ENCODE measurements at regions of chr12 and their contacts with region 1.

Region 1: DNA sequence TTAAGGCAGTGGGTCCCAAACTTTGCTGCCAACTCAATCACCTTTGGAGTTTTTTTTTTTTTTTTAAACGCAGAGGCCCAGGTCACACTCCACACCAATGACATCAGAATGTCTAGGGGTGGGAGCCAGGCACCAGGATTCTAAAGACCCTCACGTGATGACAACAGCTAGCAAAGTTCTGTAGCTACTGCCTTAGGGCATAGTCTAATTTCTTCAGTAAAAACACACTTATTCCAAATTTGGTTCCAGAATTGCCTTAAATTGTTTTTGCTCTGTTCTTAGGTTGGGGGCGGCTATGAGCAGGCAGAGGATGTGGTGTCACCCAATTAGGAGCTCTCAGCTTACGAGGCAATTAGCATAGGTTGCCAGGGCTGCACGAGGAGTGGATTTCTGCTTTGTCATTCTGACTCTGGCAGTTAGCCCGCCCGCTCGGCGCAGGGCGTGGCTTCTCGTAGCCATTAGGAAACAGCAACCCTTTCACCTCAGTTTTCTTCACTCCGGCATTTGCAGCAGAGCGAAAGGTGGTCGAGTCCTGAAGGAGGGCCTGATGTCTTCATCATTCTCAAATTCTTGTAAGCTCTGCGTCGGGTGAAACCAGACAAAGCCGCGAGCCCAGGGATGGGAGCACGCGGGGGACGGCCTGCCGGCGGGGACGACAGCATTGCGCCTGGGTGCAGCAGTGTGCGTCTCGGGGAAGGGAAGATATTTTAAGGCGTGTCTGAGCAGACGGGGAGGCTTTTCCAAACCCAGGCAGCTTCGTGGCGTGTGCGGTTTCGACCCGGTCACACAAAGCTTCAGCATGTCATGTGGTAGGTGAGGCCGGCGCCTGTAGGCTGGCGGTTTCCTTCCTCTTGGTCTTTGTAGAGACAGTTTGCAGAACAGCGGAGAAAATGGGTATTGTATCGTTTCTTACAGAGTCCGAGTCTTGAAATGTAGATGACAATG is 16.7 kb upstream of the EID3 start:
- DNase-seq: peak; percentile 96

Region 2: DNA sequence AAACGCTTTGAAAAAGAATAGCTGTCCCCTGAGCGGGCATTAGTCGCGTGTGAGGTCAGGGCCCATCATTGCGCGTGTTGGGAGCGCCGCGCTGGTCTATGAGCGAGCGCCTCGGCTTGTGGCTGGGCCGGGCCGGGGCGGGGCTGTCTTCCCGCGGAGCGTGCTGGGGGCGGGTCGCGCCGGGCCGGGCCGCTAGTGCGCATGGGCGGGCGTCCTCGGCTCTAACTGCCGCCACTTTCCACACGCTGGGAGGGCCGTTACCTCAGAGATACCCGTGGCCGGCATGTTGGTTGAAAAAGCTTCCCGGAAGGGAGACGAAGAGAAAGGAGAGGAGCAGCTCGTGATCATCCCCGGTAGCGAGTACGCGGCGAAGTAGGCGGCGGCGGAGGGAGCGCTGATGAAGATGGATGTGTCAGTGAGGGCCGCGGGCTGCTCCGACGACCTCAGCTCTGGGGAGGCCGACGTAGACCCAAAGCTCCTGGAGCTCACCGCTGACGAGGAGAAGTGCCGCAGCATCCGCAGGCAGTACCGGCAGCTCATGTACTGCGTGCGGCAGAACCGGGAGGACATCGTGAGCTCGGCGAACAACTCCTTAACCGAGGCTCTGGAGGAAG is 16.8 kb after region 1 on chr12 and contains the start of gene EID3:
- intact Hi-C with region 1: loop called (anchors 2 kb)
- DNase-seq: peak; percentile 96
- total RNA-seq, gene EID3: 2.1 TPM